Ascending aorta (tissue), 2 donors: ENCODE measurements at regions of chr14 and their contacts with region 1.

Region 1: GRCh38 chr14:56422703-56423213 is 156.8 kb upstream of the TMEM260 start:
- DNase-seq: peak in 1 of 2 donors; percentile 77
- H3K4me3 ChIP-seq: no peak overlapping the region
- H3K27ac ChIP-seq: no peak overlapping the region
- H3K4me1 ChIP-seq: peaks cover 0 to 4% of the 10 kb centered on the region in 2 donors
- H3K27me3 ChIP-seq: no peaks in the 10 kb centered on the region
- CTCF ChIP-seq: peak; percentile 44 to 70 (median 69)

Region 2: DNA sequence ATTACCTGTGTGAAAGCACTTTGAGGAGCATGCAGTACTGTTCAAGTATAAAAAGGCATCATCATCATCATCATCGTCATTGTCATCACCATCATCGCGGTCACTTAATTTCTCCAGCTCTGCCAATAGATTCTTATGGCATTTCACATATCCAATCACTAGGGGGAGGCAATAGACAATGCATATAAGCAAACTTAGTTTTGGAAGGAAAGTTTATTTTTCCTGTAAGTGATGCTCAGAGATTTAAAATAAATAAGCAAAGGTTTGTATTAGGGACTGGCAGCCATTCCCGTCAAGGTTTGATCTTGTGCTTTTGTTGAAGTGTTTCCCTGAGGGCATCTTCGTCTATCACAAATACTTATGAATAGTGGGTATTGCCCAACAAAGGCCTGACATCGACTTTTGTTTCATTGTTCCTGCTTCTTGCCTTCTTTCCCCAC is 715.4 kb before region 1 on chr14:
- intact Hi-C with region 1: loop called (anchors 1 kb)
- DNase-seq: no peak
- H3K4me3 ChIP-seq: no peak overlapping the region
- H3K27ac ChIP-seq: no peak overlapping the region
- H3K4me1 ChIP-seq: no peaks in the 10 kb centered on the region
- H3K27me3 ChIP-seq: no peaks in the 10 kb centered on the region
- CTCF ChIP-seq: peak; percentile 59 to 67 (median 64)

Region 3: GRCh38 chr14:56339855-56340701 is 82.7 kb before region 1 on chr14:
- intact Hi-C with region 1: loop called (anchors 1 kb)
- DNase-seq: peak; percentile 19 to 87
- H3K4me3 ChIP-seq: no peak overlapping the region
- H3K27ac ChIP-seq: peak overlapping the region; percentile 42 to 51
- H3K4me1 ChIP-seq: peaks cover 2 to 31% of the 10 kb centered on the region in 2 donors
- H3K27me3 ChIP-seq: no peaks in the 10 kb centered on the region
- CTCF ChIP-seq: peak; percentile 60 to 79 (median 70)

Region 4: DNA sequence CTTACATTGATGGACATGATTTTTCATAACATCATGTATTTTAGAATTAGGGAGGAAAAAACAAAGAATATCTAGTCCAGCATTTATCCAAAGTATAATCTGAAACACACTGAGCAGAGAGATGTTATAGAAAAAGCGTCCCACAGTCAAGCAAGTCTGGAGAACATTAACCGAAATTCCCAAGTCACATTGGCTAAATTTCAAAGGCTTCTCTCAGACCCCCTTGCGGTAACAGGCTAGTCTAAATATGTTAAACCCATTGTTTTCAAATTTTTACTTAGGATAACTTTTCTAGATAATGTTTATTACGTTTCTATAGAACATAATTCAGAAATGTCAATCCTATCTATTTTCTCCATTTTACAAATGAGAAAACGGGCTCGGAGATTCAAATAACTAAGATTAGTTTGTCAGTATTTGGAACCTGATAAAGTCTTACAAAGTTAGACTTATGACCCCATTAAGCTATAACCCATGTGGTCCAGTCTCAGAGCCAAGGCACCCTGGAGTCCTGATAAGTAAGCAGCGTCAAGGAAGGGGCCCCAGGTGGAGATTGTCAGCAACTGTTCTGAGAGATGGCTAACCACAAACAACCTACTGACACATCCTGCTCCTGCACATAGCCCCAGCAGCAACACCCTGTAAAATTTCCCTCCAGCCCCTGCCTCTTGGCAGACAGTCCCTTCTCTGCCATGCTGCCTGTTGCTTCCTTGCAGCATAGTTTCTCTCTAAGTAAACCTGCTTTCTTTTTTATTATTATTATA is 63.7 kb before region 1 on chr14:
- intact Hi-C with region 1: loop called (anchors 5 kb)
- DNase-seq: no peak
- H3K4me3 ChIP-seq: no peak overlapping the region
- H3K27ac ChIP-seq: no peak overlapping the region
- H3K4me1 ChIP-seq: peaks cover 5 to 14% of the 10 kb centered on the region in 2 donors
- H3K27me3 ChIP-seq: no peaks in the 10 kb centered on the region
- CTCF ChIP-seq: no peak